B cell (primary cell): ENCODE measurements at regions of chr1 and their contacts with region 1.

Region 1: GRCh38 chr1:155172732-155173477 is at the start of gene KRTCAP2:
- DNase-seq: peak; percentile 95
- ATAC-seq: peak; percentile 85
- H3K4me3 ChIP-seq: peak within 1 kb of the TSS; percentile 27 to 95 (median 73)
- H3K4me3 Mint-ChIP-seq: peak within 1 kb of the TSS; percentile 97
- H3K27ac ChIP-seq: peak within 1 kb of the TSS; percentile 89 to 92
- H3K27ac Mint-ChIP-seq: peak within 1 kb of the TSS; percentile 98
- H3K4me1 ChIP-seq: peaks cover 24 to 35% of the 10 kb centered on the region in 2 donors
- H3K4me1 Mint-ChIP-seq: peaks cover 40% of the 10 kb centered on the region
- H3K27me3 ChIP-seq: no peaks in the 10 kb centered on the region
- H3K27me3 Mint-ChIP-seq: no peaks in the 10 kb centered on the region
- CTCF ChIP-seq: peak; percentile 89
- total RNA-seq, gene KRTCAP2: 136 and 151 TPM in 2 replicates

Region 2: DNA sequence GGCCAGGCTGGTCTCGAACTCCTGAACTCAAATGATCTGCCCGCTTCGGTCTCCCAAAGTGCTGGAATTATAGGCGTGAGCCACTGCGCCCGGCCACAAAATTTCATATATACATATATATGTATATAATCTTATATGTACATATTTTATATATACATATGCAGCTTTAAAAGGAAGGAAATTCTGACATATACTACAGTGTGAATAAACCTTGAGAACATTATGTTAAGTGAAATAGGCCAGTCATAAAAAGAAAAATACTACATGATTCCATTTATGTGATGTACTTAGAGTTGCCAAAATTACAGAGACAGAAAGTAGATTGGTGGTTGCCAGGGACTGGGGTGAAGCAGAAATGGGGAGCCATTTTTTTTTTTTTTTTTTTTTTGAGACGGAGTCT is 1081.2 kb before region 1 on chr1:
- CTCF ChIA-PET with region 1: no interaction called
- POLR2A ChIA-PET with region 1: no interaction called
- intact Hi-C with region 1: no loop called
- DNase-seq: no peak
- ATAC-seq: no peak
- H3K4me3 ChIP-seq: no peak overlapping the region
- H3K4me3 Mint-ChIP-seq: no peak overlapping the region
- H3K27ac ChIP-seq: no peak overlapping the region
- H3K27ac Mint-ChIP-seq: no peak overlapping the region
- H3K4me1 ChIP-seq: no peaks in the 10 kb centered on the region
- H3K4me1 Mint-ChIP-seq: no peaks in the 10 kb centered on the region
- H3K27me3 ChIP-seq: no peaks in the 10 kb centered on the region
- H3K27me3 Mint-ChIP-seq: peaks cover 10% of the 10 kb centered on the region
- CTCF ChIP-seq: no peak

Region 3: GRCh38 chr1:154974063-154974807 is 198.7 kb before region 1 on chr1 and contains the start of gene CKS1B:
- CTCF ChIA-PET with region 1: interaction called, 5 read pairs
- POLR2A ChIA-PET with region 1: no interaction called
- intact Hi-C with region 1: loop called (anchors 5 kb)
- DNase-seq: peak; percentile 100
- ATAC-seq: peak; percentile 80
- H3K4me3 ChIP-seq: peak within 1 kb of the TSS; percentile 71 to 99 (median 90)
- H3K4me3 Mint-ChIP-seq: no peak within 1 kb of the TSS
- H3K27ac ChIP-seq: peak within 1 kb of the TSS; percentile 90 to 94
- H3K27ac Mint-ChIP-seq: no peak within 1 kb of the TSS
- H3K4me1 ChIP-seq: peaks cover 22 to 44% of the 10 kb centered on the region in 2 donors
- H3K4me1 Mint-ChIP-seq: peaks cover 29% of the 10 kb centered on the region
- H3K27me3 ChIP-seq: no peaks in the 10 kb centered on the region
- H3K27me3 Mint-ChIP-seq: no peaks in the 10 kb centered on the region
- CTCF ChIP-seq: no peak
- total RNA-seq, gene CKS1B: 16.8 and 17.5 TPM in 2 replicates

Region 4: DNA sequence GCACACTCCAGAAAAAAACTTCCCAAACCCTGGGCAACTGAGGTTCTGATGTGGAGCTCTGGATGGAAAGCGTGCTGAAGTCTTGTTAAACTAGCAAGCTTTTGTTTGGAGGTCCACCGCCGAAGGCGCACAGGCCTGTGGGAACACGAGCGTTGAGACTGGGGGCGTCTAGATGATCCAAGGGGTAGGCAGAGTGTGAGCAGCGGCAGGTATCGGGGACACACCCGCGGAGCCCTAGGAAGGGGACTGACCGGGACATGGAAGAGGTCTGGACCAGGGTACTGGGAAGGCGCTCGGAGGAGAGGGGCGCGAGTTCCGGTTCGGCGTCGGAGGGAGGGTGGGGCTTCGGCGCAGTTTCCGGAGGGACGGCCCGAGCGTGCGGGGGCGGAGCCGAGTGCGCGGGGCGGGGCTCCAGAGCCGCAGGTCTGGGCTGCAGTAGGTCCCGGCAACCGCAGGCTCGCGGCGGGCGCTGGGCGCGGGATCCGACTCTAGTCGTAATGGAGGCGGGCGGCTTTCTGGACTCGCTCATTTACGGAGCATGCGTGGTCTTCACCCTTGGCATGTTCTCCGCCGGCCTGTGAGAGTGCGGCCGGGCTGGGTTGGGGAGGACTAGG is 37.4 kb before region 1 on chr1 and contains the start of gene SLC50A1:
- CTCF ChIA-PET with region 1: interaction called, 51 read pairs
- POLR2A ChIA-PET with region 1: interaction called, 10 read pairs
- intact Hi-C with region 1: loop called (anchors 1 kb)
- DNase-seq: peak; percentile 96
- ATAC-seq: peak; percentile 86
- H3K4me3 ChIP-seq: peak within 1 kb of the TSS; percentile 86 to 99 (median 92)
- H3K4me3 Mint-ChIP-seq: peak within 1 kb of the TSS; percentile 100
- H3K27ac ChIP-seq: peak within 1 kb of the TSS; percentile 99 to 100
- H3K27ac Mint-ChIP-seq: peak within 1 kb of the TSS; percentile 98
- H3K4me1 ChIP-seq: peaks cover 22 to 26% of the 10 kb centered on the region in 2 donors
- H3K4me1 Mint-ChIP-seq: peaks cover 46% of the 10 kb centered on the region
- H3K27me3 ChIP-seq: no peaks in the 10 kb centered on the region
- H3K27me3 Mint-ChIP-seq: peaks cover 3% of the 10 kb centered on the region
- CTCF ChIP-seq: no peak
- total RNA-seq, gene SLC50A1: 61.3 and 62.8 TPM in 2 replicates

Region 5: GRCh38 chr1:155193275-155193990 is 20.5 kb after region 1 on chr1:
- CTCF ChIA-PET with region 1: interaction called, 196 read pairs
- POLR2A ChIA-PET with region 1: interaction called, 15 read pairs
- intact Hi-C with region 1: loop called (anchors 2 kb)
- DNase-seq: peak; percentile 82
- ATAC-seq: peak; percentile 72
- H3K4me3 ChIP-seq: peak overlapping the region; percentile 44 to 74 (median 50)
- H3K4me3 Mint-ChIP-seq: peak overlapping the region; percentile 91
- H3K27ac ChIP-seq: no peak overlapping the region
- H3K27ac Mint-ChIP-seq: peak overlapping the region; percentile 89
- H3K4me1 ChIP-seq: peaks cover 15 to 23% of the 10 kb centered on the region in 2 donors
- H3K4me1 Mint-ChIP-seq: peaks cover 30% of the 10 kb centered on the region
- H3K27me3 ChIP-seq: peaks cover 0 to 19% (median 1%) of the 10 kb centered on the region in 4 experiments
- H3K27me3 Mint-ChIP-seq: no peaks in the 10 kb centered on the region
- CTCF ChIP-seq: peak; percentile 94

Region 6: GRCh38 chr1:155227261-155228095 is 54.6 kb after region 1 on chr1:
- CTCF ChIA-PET with region 1: interaction called, 60 read pairs
- POLR2A ChIA-PET with region 1: interaction called, 9 read pairs
- intact Hi-C with region 1: loop called (anchors 1 kb)
- DNase-seq: peak; percentile 98
- ATAC-seq: peak; percentile 97
- H3K4me3 ChIP-seq: peak overlapping the region; percentile 61 to 93 (median 68)
- H3K4me3 Mint-ChIP-seq: peak overlapping the region; percentile 85
- H3K27ac ChIP-seq: peak overlapping the region; percentile 70
- H3K27ac Mint-ChIP-seq: peak overlapping the region; percentile 91
- H3K4me1 ChIP-seq: peaks cover 43 to 56% of the 10 kb centered on the region in 2 donors
- H3K4me1 Mint-ChIP-seq: peaks cover 43% of the 10 kb centered on the region
- H3K27me3 ChIP-seq: no peaks in the 10 kb centered on the region
- H3K27me3 Mint-ChIP-seq: no peaks in the 10 kb centered on the region
- CTCF ChIP-seq: no peak

Region 7: DNA sequence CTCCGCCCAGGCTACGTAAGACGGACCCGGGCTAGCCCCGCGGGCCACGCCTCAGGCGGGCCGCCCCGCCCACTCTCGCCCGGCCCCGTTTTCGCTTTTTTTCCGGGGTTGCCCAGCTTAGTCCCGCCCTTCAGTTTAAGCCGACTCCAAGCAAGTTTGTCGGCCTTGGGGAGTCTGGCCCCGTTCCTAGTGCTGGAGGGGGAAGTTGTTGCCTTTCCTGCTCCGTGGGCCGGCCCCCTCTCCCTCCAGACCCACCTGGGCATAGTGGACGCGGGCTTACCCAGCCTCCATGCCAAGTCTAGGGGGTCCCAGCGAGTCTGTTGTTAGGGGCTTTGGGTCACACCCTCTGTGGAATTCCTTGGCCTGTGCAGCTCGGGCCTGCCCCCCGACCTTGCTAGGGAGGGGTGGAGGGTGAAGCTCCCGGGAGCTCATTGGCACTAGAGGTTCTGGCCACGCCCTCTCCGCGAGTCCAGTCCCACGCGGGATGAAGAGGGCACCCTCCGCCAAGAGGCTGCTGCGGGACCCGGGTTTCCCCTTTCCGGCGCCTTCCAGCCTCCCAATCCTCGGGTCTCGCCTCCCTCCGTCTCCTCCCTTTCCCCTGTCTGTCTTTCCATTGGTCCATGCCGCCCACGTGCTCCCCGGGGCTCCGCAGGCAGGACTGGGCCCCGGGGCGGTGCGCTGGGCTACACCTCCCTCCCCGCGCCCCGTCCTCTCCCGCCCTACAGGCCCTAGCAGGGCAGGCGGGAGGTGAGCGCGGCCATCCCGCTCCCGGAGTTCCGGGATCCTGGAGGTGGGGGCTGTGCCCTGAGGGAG is 151.1 kb after region 1 on chr1:
- CTCF ChIA-PET with region 1: no interaction called
- POLR2A ChIA-PET with region 1: no interaction called
- intact Hi-C with region 1: loop called (anchors 1 kb)
- DNase-seq: peak; percentile 89
- ATAC-seq: peak; percentile 74
- H3K4me3 ChIP-seq: peak overlapping the region; percentile 64 to 100 (median 97)
- H3K4me3 Mint-ChIP-seq: peak overlapping the region; percentile 92
- H3K27ac ChIP-seq: peak overlapping the region; percentile 81 to 85
- H3K27ac Mint-ChIP-seq: peak overlapping the region; percentile 87
- H3K4me1 ChIP-seq: peaks cover 17 to 35% of the 10 kb centered on the region in 2 donors
- H3K4me1 Mint-ChIP-seq: peaks cover 32% of the 10 kb centered on the region
- H3K27me3 ChIP-seq: no peaks in the 10 kb centered on the region
- H3K27me3 Mint-ChIP-seq: no peaks in the 10 kb centered on the region
- CTCF ChIP-seq: no peak

Region 8: GRCh38 chr1:155392898-155393411 is 220.1 kb after region 1 on chr1:
- CTCF ChIA-PET with region 1: no interaction called
- POLR2A ChIA-PET with region 1: no interaction called
- intact Hi-C with region 1: no loop called
- DNase-seq: no peak
- ATAC-seq: no peak
- H3K4me3 ChIP-seq: no peak overlapping the region
- H3K4me3 Mint-ChIP-seq: no peak overlapping the region
- H3K27ac ChIP-seq: no peak overlapping the region
- H3K27ac Mint-ChIP-seq: no peak overlapping the region
- H3K4me1 ChIP-seq: no peaks in the 10 kb centered on the region
- H3K4me1 Mint-ChIP-seq: no peaks in the 10 kb centered on the region
- H3K27me3 ChIP-seq: no peaks in the 10 kb centered on the region
- H3K27me3 Mint-ChIP-seq: no peaks in the 10 kb centered on the region
- CTCF ChIP-seq: no peak